H1 (cell line): ENCODE measurements at regions of chr11 and their contacts with region 1.

Region 1: GRCh38 chr11:69888483-69889076 is 69.4 kb upstream of the FGF3 start:
- DNase-seq: peak; percentile 75 to 96
- H3K4me3 ChIP-seq: no peak overlapping the region
- H3K27ac ChIP-seq: no peak overlapping the region
- H3K4me1 ChIP-seq: peaks cover 8 to 24% (median 10%) of the 10 kb centered on the region in 4 experiments
- H3K27me3 ChIP-seq: peaks cover 0 to 28% (median 12%) of the 10 kb centered on the region in 4 experiments; a peak in 5 of 7 replicates
- CTCF ChIP-seq: peak; percentile 93 to 100 (median 97)
- EP300 ChIP-seq: no peak
- POLR2A ChIP-seq: no peak
- RAD21 ChIP-seq: peak; percentile 76 to 84

Region 2: GRCh38 chr11:69704508-69705253 is 183.9 kb before region 1 on chr11:
- CTCF ChIA-PET with region 1: interaction called, 12 read pairs
- POLR2A ChIA-PET with region 1: interaction called, 4 read pairs
- DNase-seq: peak in 1 of 2 experiments; percentile 96
- H3K4me3 ChIP-seq: peak overlapping the region; percentile 37 to 78 (median 62)
- H3K27ac ChIP-seq: 0 out of 2 replicates have a peak overlapping the region, but pooled peaks have one; percentile 44
- H3K4me1 ChIP-seq: peaks cover 11 to 36% (median 24%) of the 10 kb centered on the region in 4 experiments
- H3K27me3 ChIP-seq: peaks cover 0 to 26% (median 17%) of the 10 kb centered on the region in 4 experiments; a peak in 5 of 7 replicates
- CTCF ChIP-seq: peak; percentile 63 to 76 (median 75)
- EP300 ChIP-seq: no peak
- POLR2A ChIP-seq: no peak
- RAD21 ChIP-seq: peak; percentile 70 to 82

Region 3: DNA sequence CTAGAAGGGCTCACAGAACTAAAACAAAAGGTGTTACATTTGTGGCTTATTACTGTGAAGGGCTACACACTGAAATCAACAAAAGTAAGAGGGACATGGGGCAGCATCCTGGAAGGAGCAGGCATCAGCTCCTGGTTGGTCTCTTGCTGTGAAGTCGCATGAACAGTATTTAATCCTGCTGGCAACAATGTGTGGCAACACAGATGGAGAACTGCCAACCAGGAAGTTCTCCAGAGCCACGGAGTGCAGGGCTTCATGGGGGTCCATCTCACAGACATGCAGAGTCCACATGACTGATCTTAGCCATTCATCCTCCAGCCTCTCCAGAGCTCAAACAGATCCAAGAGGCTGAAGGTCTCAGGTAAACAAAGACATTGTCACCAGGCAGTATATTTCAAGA is 36.5 kb before region 1 on chr11:
- CTCF ChIA-PET with region 1: interaction called, 10 read pairs
- POLR2A ChIA-PET with region 1: no interaction called
- DNase-seq: no peak
- H3K4me3 ChIP-seq: no peak overlapping the region
- H3K27ac ChIP-seq: no peak overlapping the region
- H3K4me1 ChIP-seq: no peaks in the 10 kb centered on the region
- H3K27me3 ChIP-seq: peaks cover 0 to 5% (median 0%) of the 10 kb centered on the region in 4 experiments; a peak in 3 of 7 replicates
- CTCF ChIP-seq: no peak
- EP300 ChIP-seq: no peak
- POLR2A ChIP-seq: no peak
- RAD21 ChIP-seq: no peak

Region 4: GRCh38 chr11:69874984-69875624 is 13.5 kb before region 1 on chr11:
- CTCF ChIA-PET with region 1: interaction called, 24 read pairs
- POLR2A ChIA-PET with region 1: interaction called, 3 read pairs
- DNase-seq: peak in 1 of 2 experiments; percentile 41
- H3K4me3 ChIP-seq: no peak overlapping the region
- H3K27ac ChIP-seq: no peak overlapping the region
- H3K4me1 ChIP-seq: peaks cover 0 to 8% (median 1%) of the 10 kb centered on the region in 4 experiments; a peak in 4 of 7 replicates
- H3K27me3 ChIP-seq: no peaks in the 10 kb centered on the region; a peak in 2 of 7 replicates
- CTCF ChIP-seq: no peak
- EP300 ChIP-seq: no peak
- POLR2A ChIP-seq: no peak
- RAD21 ChIP-seq: no peak